Ascending aorta (tissue), 2 donors: ENCODE measurements at regions of chr6 and their contacts with region 1.

Region 1: DNA sequence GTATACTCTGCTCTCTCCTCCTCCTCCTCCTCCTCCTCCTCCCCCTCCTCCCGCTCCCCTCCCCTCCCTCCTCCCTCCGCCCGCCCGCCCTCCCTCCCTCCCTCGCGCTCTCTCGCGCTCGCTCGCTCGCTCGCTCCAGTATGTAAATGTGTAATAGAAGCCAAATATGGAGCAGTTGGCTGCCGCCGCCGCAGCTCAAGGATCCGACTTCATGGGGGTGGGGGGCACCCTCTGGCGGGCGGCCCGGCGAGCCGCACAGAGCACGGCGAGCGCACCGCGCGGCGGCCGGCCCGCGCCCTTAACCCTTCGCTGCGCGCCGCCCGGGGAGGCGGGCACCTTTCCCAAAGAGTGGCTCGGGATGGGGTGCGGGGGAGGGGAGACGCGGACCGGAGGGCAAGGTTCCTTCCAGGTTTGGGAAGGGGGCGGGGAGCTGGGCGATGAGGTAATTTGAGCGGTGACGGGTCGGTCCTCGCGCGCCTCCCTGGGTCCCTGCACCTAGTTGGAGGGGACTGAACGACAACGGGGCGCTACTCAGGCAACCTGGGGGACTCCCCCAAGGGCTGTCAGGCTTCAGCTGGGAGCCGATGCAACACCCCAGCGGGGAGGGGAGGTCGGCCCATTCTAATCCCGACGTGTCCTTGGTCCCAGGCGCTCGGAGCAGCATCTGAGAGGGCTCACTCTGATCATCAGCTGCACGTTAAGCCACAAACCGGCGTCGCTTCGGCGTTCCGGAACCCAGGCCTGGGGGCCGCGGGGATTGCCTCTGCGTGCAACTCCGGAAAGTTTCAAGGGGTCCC is 409 bp upstream of the ATXN1 start:
- DNase-seq: peak; percentile 76 to 95
- H3K4me3 ChIP-seq: peak overlapping the region; percentile 96
- H3K27ac ChIP-seq: peak overlapping the region; percentile 96 to 98
- H3K4me1 ChIP-seq: peaks cover 7 to 31% of the 10 kb centered on the region in 2 donors
- H3K27me3 ChIP-seq: no peaks in the 10 kb centered on the region
- CTCF ChIP-seq: peak in 2 of 3 experiments; percentile 17 to 54

Region 2: DNA sequence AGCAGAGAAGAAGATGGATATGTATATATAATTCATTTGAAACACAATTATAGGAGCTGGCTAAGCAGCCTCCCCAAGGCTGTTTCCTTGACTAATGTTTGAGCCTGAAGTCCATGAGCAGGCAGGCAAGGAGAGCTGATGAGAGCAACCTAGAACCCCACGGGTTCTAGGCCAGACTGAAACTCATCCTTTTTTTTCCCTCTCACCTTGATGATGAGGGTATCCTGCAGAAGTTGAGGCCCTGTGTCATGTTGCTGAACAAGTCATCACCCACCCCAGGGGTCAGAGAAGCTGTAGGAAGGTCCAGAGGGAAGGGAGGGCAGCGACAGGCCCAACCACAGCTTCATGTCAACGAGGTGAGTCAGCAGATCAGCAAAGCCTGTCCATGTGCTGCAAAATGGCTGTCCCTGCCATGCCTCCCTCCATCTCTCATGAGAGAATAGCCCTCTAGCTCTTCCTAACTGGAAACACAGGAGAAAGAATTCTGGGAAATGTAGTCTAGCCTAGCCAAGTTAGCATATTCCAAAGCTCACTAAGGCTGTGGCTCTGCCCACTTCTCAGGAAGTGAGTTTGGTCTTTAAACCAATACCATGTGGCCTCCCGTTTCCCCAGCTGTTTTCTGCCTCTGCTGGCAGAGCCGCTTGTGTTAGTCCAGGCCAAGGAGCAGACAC is 1007.5 kb before region 1 on chr6:
- intact Hi-C with region 1: no loop called
- DNase-seq: no peak
- H3K4me3 ChIP-seq: no peak overlapping the region
- H3K27ac ChIP-seq: no peak overlapping the region
- H3K4me1 ChIP-seq: no peaks in the 10 kb centered on the region
- H3K27me3 ChIP-seq: no peaks in the 10 kb centered on the region
- CTCF ChIP-seq: no peak

Region 3: GRCh38 chr6:16319813-16320532 is 441.7 kb before region 1 on chr6:
- intact Hi-C with region 1: loop called (anchors 5 kb)
- DNase-seq: peak; percentile 88 to 94
- H3K4me3 ChIP-seq: peak overlapping the region; percentile 42 to 56
- H3K27ac ChIP-seq: peak overlapping the region; percentile 96
- H3K4me1 ChIP-seq: peaks cover 11 to 63% of the 10 kb centered on the region in 2 donors
- H3K27me3 ChIP-seq: no peaks in the 10 kb centered on the region
- CTCF ChIP-seq: no peak

Region 4: GRCh38 chr6:16398587-16398986 is 363.1 kb before region 1 on chr6:
- intact Hi-C with region 1: loop called (anchors 5 kb)
- DNase-seq: no peak
- H3K4me3 ChIP-seq: peak overlapping the region in 1 of 2 donors; percentile 12
- H3K27ac ChIP-seq: peak overlapping the region; percentile 83 to 84
- H3K4me1 ChIP-seq: peaks cover 8 to 30% of the 10 kb centered on the region in 2 donors
- H3K27me3 ChIP-seq: no peaks in the 10 kb centered on the region
- CTCF ChIP-seq: no peak

Region 5: DNA sequence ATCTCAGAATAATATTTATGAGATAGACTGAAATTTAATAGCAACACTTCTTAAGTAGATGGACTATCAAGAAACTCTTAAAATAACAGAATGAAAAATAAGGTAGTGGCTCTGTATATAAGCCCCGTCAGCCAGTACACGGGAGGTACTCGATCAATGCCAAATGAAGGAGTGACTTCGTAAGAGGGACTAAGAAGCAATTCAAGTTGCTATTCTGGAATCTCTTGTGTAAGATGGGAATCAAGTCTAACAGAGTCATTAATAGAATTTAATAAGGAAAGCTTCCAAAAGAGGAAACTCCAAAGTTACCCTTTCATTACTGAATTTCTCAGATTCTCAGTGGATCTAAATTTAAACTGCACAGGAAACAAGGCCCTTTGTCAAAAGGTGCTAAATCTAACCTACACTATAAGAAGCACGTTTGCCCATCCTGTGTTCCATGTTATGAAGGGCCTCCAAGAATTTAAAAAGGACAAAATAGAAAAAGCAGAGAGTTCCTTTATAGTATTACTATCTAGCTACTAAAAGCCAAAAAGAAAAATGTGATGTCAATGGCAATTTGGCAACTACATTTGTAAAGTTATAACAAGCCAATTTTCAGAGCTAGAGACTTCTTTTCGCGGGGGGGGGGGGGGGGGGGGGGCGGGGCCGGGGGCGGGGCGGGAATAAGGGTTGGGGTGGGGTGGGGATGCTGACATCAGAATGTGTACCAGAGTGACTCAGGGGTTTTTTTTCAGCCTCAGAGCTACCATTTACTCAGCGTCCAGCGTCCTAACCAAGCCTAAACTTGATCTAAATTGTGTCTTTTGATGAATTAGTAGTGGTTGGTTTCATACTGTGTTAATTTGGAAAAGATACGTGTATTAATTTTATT is 322.7 kb before region 1 on chr6:
- intact Hi-C with region 1: loop called (anchors 2 kb)
- DNase-seq: no peak
- H3K4me3 ChIP-seq: no peak overlapping the region
- H3K27ac ChIP-seq: peak overlapping the region; percentile 58 to 70
- H3K4me1 ChIP-seq: peaks cover 2 to 39% of the 10 kb centered on the region in 2 donors
- H3K27me3 ChIP-seq: no peaks in the 10 kb centered on the region
- CTCF ChIP-seq: no peak

Region 6: GRCh38 chr6:16514249-16514648 is 247.4 kb before region 1 on chr6:
- intact Hi-C with region 1: loop called (anchors 5 kb)
- DNase-seq: no peak
- H3K4me3 ChIP-seq: no peak overlapping the region
- H3K27ac ChIP-seq: no peak overlapping the region
- H3K4me1 ChIP-seq: peaks cover 3 to 20% of the 10 kb centered on the region in 2 donors
- H3K27me3 ChIP-seq: no peaks in the 10 kb centered on the region
- CTCF ChIP-seq: peak; percentile 37 to 54 (median 44)

Region 7: DNA sequence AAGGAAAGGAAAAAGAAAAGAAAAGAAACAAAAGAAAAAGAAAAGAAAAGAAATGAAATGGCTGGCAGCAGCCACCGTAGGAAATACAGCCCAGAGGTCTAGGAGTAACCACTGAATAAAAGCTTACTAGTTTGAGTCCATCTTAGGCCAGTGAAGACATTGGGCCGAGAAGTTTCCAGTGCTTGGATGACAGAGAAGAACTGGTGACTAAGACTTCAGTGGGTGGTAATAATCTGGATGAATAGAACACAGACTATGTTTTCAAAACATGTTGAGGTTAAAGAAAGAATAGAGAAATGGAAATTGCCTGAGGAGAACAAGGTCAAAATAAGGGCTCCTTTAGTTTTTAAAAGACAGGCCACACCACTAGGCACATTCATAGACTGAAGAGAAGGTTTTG is 199.2 kb before region 1 on chr6:
- intact Hi-C with region 1: loop called (anchors 5 kb)
- DNase-seq: no peak
- H3K4me3 ChIP-seq: no peak overlapping the region
- H3K27ac ChIP-seq: peak overlapping the region in 1 of 2 donors; percentile 4
- H3K4me1 ChIP-seq: peaks cover 0 to 12% of the 10 kb centered on the region in 2 donors
- H3K27me3 ChIP-seq: no peaks in the 10 kb centered on the region
- CTCF ChIP-seq: no peak

Region 8: DNA sequence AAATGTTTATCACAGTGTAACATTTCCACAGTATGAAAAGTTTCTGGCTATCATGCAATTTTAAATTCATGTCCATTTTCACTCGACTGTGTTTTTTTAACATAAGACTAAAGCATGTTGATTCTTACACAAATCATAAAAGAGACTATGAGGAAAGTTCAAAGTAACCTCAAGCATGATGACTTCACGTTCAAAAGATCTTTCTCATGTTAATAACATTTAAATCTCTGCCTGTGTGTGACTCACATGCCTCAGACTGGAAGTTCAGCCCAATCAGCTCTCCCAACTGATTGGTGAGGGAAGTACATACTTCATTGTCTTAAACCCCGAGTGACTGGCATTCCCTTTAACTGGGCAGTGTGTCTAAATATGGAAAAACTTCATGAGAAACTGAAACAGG is 37.8 kb before region 1 on chr6:
- intact Hi-C with region 1: loop called (anchors 2 kb)
- DNase-seq: peak in 1 of 2 donors; percentile 86
- H3K4me3 ChIP-seq: peak overlapping the region in 1 of 2 donors; percentile 26
- H3K27ac ChIP-seq: peak overlapping the region; percentile 81 to 86
- H3K4me1 ChIP-seq: peaks cover 8 to 43% of the 10 kb centered on the region in 2 donors
- H3K27me3 ChIP-seq: no peaks in the 10 kb centered on the region
- CTCF ChIP-seq: no peak